ENCODE measurements at regions of chr11 and their contacts with region 1.

Region 1: GRCh38 chr11:65418711-65419459 is 3.7 kb upstream of the NEAT1 start:
- DNase-seq: peak; percentile 91
- H3K4me3 ChIP-seq: peak overlapping the region; percentile 13 to 18; a peak in 3 of 4 replicates
- H3K27ac ChIP-seq: peak overlapping the region; percentile 100
- H3K4me1 ChIP-seq: peaks cover 50 to 61% of the 10 kb centered on the region in 2 experiments
- H3K27me3 ChIP-seq: no peaks in the 10 kb centered on the region
- CTCF ChIP-seq: no peak
- EP300 ChIP-seq: peak; percentile 36 to 65; a peak in 3 of 4 replicates
- RAD21 ChIP-seq: no peak

Region 2: DNA sequence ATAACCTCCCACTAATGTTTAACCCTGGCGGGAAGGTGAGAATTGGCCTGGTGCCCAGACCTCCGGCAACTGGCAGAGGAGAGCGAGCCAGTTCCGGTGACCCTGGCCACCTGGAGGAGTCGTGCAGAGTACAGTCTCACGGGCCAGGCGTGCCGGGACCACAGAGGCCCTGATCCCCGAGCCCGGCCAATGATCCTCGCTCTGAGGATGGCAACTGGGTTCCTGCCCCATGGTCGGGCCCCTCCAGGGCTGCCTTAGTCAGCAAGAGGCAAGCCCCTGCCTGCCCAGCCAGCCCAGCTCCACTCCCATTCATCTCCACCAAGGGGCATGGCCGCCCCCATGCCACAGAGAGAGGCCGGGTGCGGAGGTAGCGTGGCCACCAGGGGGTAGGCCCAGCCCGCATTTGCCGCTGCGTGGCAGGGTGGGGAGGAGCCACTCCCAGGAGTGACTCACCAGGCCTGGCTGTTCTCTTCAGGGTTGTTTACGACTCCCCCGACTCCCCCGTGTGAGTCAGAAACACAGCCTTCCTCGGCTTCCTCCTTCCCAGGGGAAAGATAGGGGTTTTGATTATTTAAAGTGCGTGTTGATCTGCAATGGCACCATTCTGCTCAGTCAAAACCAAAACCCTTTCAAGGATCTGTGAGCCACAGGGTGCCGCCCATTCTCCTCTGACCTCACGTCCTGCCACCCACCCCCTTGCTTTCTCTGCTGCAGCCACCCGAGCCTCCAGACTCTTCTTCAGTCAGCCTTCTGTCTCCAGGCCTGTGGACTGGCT is 36.7 kb before region 1 on chr11 and contains the start of gene SLC25A45:
- CTCF ChIA-PET with region 1: interaction called, 47 read pairs
- POLR2A ChIA-PET with region 1: interaction called, 24 read pairs
- DNase-seq: peak; percentile 89
- H3K4me3 ChIP-seq: peak within 1 kb of the TSS; percentile 44 to 61
- H3K27ac ChIP-seq: peak within 1 kb of the TSS; percentile 98 to 99
- H3K4me1 ChIP-seq: peaks cover 29 to 49% of the 10 kb centered on the region in 2 experiments; a peak in 3 of 4 replicates
- H3K27me3 ChIP-seq: no peaks in the 10 kb centered on the region
- CTCF ChIP-seq: peak; percentile 75
- EP300 ChIP-seq: peak; percentile 7 to 70; a peak in 1 of 4 replicates
- RAD21 ChIP-seq: peak; percentile 71
- polyA plus RNA-seq, gene SLC25A45: 3.1 and 3.6 TPM in 2 replicates

Region 3: GRCh38 chr11:65429724-65430405 is 11.0 kb after region 1 on chr11:
- CTCF ChIA-PET with region 1: interaction called, 11 read pairs
- POLR2A ChIA-PET with region 1: interaction called, 11 read pairs
- DNase-seq: no peak
- H3K4me3 ChIP-seq: peak overlapping the region; percentile 77 to 83
- H3K27ac ChIP-seq: peak overlapping the region; percentile 100
- H3K4me1 ChIP-seq: peaks cover 4 to 39% of the 10 kb centered on the region in 2 experiments; a peak in 2 of 4 replicates
- H3K27me3 ChIP-seq: no peaks in the 10 kb centered on the region
- CTCF ChIP-seq: no peak
- EP300 ChIP-seq: no peak
- RAD21 ChIP-seq: no peak

Region 4: DNA sequence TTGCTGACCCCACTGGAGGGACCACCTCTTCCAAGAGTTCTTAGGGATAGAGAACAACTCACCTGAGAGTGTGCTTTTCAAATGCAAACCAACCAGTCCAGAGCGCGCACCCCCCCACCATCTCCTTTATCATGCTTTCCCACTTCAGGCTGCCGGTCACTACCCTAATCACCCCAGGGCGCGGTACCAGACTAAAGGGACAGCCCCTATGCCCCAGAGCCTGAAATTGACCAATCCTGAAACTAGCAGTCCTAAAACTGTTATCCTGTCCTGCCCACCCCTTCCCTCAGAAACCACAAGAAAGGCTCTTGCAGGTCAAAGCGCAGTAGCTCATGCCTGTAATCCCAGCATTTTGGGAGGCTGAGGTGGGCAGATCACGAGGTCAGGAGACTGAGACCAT is 40.7 kb after region 1 on chr11:
- CTCF ChIA-PET with region 1: interaction called, 13 read pairs
- POLR2A ChIA-PET with region 1: interaction called, 3 read pairs
- DNase-seq: no peak
- H3K4me3 ChIP-seq: no peak overlapping the region
- H3K27ac ChIP-seq: no peak overlapping the region
- H3K4me1 ChIP-seq: peaks cover 6 to 8% of the 10 kb centered on the region in 2 experiments; a peak in 2 of 4 replicates
- H3K27me3 ChIP-seq: no peaks in the 10 kb centered on the region
- CTCF ChIP-seq: no peak
- EP300 ChIP-seq: no peak
- RAD21 ChIP-seq: no peak

Region 5: DNA sequence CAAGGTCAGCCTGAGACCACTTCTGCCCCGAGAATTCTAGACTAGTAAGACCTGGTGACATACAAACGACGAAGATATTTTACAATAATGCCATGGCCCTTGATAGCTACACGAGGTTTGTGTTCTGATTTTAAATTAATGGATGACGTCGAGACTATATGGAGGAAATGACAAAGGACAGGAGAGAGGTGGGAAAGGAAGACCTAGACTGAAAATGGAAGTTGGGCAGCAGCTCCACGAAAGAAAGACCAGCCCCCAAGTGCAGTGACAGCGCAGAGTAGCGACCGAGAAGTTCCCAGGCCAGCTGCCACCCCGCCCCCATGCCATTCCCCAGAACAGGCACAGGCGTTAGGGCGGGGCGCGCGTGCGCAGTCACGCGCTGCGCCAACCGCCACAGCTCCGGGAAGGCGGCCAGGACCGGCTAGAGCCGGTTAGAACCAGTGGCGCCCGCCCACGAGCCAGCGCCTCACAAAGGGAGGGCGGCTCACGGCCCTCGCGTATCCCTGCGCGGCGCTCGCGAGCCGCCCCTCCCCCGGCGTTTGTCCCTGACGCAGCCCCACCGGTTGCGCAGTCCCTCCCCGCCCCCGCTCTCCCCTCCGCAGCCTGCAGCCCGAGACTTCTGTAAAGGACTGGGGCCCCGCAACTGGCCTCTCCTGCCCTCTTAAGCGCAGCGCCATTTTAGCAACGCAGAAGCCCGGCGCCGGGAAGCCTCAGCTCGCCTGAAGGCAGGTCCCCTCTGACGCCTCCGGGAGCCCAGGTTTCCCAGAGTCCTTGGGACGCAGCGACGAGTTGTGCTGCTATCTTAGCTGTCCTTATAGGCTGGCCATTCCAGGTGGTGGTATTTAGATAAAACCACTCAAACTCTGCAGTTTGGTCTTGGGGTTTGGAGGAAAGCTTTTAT is 78.5 kb after region 1 on chr11:
- CTCF ChIA-PET with region 1: interaction called, 57 read pairs
- POLR2A ChIA-PET with region 1: interaction called, 1,027 read pairs
- DNase-seq: peak; percentile 91
- H3K4me3 ChIP-seq: peak overlapping the region; percentile 84 to 87
- H3K27ac ChIP-seq: peak overlapping the region; percentile 100
- H3K4me1 ChIP-seq: peaks cover 32 to 36% of the 10 kb centered on the region in 2 experiments
- H3K27me3 ChIP-seq: no peaks in the 10 kb centered on the region
- CTCF ChIP-seq: peak; percentile 15; the same call in 1 of the 2 replicates
- EP300 ChIP-seq: peak; percentile 92 to 95
- RAD21 ChIP-seq: peak; percentile 22